ENCODE measurements at regions of chr1 and their contacts with region 1.

Region 1: GRCh38 chr1:160997323-160998038 is 23.5 kb downstream of the F11R start:
- DNase-seq: peak; percentile 57
- H3K4me3 ChIP-seq: no peak overlapping the region
- H3K27ac ChIP-seq: peak overlapping the region in 1 of 2 donors; percentile 35
- H3K4me1 ChIP-seq: no peaks in the 10 kb centered on the region
- H3K27me3 ChIP-seq: no peaks in the 10 kb centered on the region
- CTCF ChIP-seq: peak in 3 of 4 experiments; percentile 41 to 68 (median 68)
- POLR2A ChIP-seq: no peak

Region 2: GRCh38 chr1:160726498-160727315 is 270.8 kb before region 1 on chr1:
- intact Hi-C with region 1: loop called (anchors 10 kb)
- DNase-seq: peak; percentile 68
- H3K4me3 ChIP-seq: no peak overlapping the region
- H3K27ac ChIP-seq: peak overlapping the region in 1 of 2 donors; percentile 45
- H3K4me1 ChIP-seq: no peaks in the 10 kb centered on the region
- H3K27me3 ChIP-seq: no peaks in the 10 kb centered on the region
- CTCF ChIP-seq: peak; percentile 43 to 85 (median 78)
- POLR2A ChIP-seq: no peak

Region 3: DNA sequence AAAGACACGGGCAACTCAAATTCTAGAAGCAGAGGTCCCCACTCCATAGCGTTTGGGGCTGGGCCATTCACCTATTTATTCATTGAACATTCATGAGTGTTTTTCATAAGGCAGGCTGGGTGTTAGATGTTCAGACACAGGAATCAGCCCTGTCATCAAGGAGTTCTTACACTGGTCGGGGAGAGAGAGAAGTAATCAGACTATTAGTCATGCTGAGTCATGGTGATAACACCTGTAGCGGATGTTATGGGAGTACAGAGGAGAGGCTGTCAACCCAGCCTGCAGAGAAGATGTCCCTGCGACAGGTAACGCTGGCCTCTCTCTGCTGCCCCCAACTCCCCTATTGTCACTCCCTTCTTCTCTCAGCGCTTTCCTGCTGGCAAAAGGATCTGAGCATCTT is 184.3 kb before region 1 on chr1:
- intact Hi-C with region 1: no loop called
- DNase-seq: no peak
- H3K4me3 ChIP-seq: no peak overlapping the region
- H3K27ac ChIP-seq: no peak overlapping the region
- H3K4me1 ChIP-seq: no peaks in the 10 kb centered on the region
- H3K27me3 ChIP-seq: no peaks in the 10 kb centered on the region
- CTCF ChIP-seq: no peak
- POLR2A ChIP-seq: no peak

Region 4: DNA sequence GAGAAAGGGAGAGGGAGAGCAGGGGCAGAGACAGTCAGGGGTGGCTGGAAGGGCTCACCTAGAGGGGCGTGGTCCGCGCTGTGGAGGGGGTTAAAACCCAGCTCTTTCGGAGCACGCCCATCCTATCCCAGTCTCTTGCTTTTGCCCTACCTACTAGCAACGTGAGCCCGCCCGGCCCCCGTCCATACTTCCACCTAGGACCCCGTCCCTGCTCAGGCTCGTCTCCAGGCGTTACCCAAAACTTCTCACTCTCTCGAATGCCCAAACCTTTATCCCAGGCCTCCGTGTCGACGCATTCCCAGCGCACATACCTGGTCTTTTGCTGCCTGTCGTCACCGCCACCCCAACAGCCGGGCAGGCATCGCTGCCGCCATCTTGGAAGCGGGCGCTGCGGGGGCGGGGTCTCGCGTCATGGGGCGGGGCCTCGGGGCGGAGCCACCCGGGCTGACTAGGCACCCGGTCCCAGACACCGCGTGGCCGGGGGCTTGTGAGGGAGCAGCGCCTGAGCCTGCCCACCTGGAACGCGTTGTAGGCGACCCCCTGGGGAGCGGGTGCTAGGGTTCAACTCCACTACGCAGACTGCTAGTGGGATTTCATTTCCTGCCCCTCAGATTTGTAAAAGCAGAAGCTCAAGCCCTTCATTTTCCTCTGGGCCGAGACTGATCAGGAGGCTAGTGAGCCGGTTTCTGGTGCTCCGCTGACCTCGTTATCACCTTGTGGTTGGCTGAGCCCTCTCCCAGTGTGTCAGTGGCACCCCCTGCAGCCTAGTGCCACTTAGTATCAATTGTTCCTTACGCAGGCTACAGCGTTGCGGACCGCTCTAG is 179.8 kb after region 1 on chr1 and contains the start of gene B4GALT3:
- intact Hi-C with region 1: no loop called
- DNase-seq: peak; percentile 84
- H3K4me3 ChIP-seq: peak within 1 kb of the TSS; percentile 75 to 77
- H3K27ac ChIP-seq: peak within 1 kb of the TSS; percentile 84 to 87
- H3K4me1 ChIP-seq: no peaks in the 10 kb centered on the region
- H3K27me3 ChIP-seq: no peaks in the 10 kb centered on the region
- CTCF ChIP-seq: no peak
- POLR2A ChIP-seq: peak; percentile 70
- total RNA-seq, gene B4GALT3: 38.2 to 68.7 TPM